Astrocyte of the cerebellum (primary cell): ENCODE measurements at regions of chr6 and their contacts with region 1.

Region 1: DNA sequence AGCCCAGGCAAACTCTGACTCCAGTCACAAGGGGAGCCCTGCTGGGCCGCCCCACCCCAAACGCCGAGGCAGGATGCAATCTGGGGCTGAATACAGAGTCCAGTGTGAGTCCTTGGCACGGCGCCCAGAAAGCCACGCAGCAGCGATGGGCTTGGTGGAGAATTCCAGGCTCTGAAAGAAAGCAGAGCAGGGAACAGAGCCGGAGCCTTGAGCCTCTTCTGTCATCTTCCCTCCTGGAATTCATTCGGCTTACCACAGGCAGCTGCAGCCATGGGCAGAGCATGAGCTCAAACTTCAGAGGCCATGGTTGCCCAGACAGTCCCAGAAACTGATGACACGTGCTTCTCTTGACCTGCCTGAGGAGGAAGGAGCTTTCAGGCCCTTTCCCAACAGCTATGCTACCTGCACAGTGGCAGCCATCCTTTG is 441.1 kb upstream of the JARID2 start:
- DNase-seq: peak; percentile 82
- H3K4me3 ChIP-seq: no peak overlapping the region
- CTCF ChIP-seq: no peak

Region 2: DNA sequence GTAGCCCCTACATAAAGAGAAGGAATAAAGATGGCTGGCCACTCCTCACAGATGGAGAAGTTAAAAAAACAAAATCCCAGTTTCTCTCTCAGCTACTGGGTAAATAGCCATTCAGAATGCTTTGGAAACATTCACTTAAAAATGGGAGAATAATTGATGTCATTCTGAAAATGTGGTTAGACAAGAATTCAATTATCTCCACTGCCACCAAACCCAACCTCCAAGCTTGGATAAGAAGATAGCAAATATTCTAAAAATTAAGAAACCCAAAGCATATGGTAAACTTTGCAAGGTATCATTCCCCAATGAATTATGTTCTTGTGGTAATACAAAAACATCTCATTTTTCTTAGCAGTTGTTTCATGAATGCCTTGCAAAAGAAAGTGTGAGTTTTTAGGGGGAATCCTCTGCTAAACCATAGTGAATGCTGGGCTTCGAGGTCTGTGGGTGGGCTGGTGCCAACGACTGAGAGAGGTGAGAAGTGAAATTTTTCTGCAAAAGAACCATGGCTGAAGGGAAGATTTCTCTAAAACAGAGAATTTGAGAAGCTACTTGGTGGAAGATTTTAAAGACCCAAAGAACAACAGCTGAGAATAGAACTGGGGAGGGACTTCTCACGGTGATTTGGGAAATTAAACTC is 56.8 kb before region 1 on chr6:
- in situ Hi-C with region 1: no loop called
- DNase-seq: no peak
- H3K4me3 ChIP-seq: no peak overlapping the region
- CTCF ChIP-seq: no peak

Region 3: DNA sequence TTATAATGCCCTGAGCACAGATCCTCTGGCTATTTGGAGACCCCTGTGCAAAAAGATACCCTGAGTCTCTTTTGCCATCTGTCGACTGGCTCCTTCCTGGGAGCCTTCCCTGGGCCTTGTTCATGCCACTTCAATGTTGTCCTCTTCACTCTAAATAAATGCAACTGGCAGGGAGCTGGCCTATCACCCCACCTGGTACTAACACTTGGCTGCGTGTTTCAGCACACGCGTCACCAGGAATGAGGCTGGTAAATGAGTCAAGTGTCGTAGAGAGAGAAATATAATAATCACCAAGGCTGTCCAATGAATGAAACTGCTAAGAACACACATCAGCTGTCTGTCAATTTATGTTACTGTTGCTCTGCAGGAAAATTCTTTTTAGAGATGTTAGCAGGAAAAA is 66.4 kb after region 1 on chr6:
- in situ Hi-C with region 1: loop called (anchors 5 kb)
- DNase-seq: no peak
- H3K4me3 ChIP-seq: no peak overlapping the region
- CTCF ChIP-seq: no peak